GM12878 (cell line): ENCODE measurements at regions of chr12 and their contacts with region 1.

Region 1: DNA sequence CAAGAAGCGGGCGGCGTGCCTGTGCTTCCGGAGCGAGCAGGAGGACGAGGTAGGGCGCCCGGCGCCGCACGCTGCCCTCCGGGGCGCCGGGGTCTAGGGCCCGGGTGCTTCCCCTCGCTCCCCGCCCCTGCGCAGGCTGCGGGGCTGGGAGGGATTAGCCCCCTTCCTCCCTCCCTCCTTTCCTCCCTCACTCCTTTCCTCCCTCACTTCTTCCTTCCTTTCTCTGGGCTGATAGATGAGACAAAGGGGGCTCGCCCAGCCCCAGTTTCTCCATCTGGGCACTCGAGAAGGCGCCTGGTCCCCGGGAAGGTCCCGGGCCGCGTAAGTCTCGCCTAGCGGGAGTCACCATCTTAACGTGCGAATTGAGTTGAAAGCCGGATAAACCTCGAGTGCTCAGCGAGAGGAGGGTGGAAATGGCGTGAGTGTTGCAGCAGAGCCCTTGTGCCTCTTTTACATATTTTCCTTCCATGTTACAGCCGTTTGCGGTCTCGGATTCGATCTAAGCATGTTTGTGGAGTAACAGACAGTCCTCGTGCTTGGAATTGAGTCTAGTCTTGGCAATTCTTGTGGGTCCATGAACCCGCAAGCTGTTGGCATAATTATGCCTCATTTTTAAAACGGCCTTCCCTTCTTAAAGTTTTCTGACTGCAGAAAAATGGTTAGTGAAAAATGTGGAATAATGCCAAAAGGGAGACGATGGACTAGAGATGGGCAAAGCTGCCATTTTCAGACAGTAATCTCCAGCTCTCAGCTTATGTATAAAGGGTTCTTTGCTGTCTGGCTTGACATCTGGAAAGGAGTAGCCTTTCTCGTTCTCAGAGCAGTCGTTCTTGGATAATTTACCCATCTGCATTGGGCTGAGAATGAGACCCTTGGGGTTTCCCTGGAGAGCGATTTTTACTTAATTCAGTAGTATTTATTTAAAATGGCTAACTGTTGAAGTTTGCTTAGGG is 924 bp downstream of the NUDT4 start:
- DNase-seq: no peak
- ATAC-seq: peak; percentile 51
- H3K4me3 ChIP-seq: peak overlapping the region; percentile 87
- H3K27ac ChIP-seq: peak overlapping the region; percentile 98
- H3K4me1 ChIP-seq: peaks cover 15% of the 10 kb centered on the region
- H3K27me3 ChIP-seq: no peaks in the 10 kb centered on the region
- CTCF ChIP-seq: no peak
- EP300 ChIP-seq: no peak
- POLR2A ChIP-seq: peak; percentile 56
- RAD21 ChIP-seq: no peak

Region 2: DNA sequence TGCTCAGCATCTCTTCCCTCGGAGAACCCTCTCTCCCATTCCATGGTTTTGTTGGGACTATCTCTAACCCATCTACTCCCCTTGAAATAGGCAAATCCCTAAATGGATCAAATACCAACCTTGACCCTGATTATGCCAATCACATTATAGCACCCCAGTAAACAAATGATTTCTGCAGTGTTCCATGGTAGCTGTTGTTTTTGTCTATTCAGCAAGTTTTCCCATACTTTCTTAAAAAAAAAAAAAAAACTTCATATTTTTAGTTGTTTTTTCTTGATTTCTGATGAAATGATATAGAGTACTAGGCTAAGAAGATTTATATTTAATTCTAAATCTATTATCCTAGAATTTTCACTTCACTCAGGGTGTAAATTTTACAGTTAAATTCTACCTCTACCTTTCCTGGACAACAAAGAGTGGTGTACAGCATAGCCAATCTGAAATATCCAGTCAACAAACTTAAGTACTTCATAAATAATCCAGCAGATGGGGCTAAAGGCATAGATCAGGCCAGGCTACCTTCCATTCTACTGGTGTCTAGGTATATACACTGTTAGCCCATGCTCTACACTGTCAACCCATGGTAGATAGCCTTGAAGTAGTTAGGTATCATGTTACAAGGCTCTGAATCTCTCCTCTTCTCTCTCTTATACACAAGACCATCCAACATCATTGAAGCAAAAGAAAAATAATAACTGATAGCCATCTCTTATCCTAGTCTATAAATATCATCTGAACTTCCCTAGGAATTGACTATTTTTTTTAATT is 593.7 kb before region 1 on chr12:
- CTCF ChIA-PET with region 1: interaction called, 4 read pairs
- POLR2A ChIA-PET with region 1: no interaction called
- RAD21 ChIA-PET with region 1: interaction called, 3 read pairs
- SMC1A ChIA-PET with region 1: interaction called, 10 read pairs
- in situ Hi-C with region 1: no loop called
- intact Hi-C with region 1: no loop called
- DNase-seq: peak; percentile 70
- ATAC-seq: peak; percentile 99
- H3K4me3 ChIP-seq: no peak overlapping the region
- H3K27ac ChIP-seq: no peak overlapping the region
- H3K4me1 ChIP-seq: peaks cover 2% of the 10 kb centered on the region; the same call in 1 of the 2 replicates
- H3K27me3 ChIP-seq: no peaks in the 10 kb centered on the region
- CTCF ChIP-seq: peak; percentile 51 to 84 (median 57); a peak in 5 of 6 replicates
- EP300 ChIP-seq: no peak
- POLR2A ChIP-seq: no peak
- RAD21 ChIP-seq: peak; percentile 97

Region 3: DNA sequence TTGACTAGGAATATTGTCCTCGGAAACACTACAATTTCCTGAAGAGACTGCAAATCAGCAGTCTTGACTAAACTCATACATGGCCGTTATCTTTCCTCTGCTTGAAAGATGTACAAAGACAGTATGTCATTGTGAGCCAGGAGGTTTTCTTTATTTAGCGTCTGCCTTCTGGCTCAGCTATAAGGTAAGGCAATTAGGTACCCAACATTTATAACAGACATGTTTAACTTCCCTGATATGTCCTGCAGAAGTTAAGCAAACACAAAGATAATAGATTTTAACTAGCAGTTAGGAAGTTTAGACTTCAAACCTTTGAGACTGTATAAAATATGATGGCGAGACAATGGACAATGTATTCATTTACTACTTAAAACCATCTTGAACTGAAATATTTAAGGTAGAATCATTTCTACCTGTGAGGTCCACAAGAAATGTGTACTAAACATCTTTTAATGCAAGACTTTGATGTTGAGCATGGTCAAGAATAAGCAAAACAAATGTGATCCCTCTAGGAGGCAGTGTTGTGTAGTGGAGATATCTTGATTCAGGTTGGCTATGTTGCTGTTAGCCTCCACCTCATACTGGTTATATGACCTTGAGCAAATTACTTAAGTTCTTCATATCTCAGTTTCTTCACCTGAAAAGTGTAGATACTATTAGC is 353.4 kb before region 1 on chr12:
- CTCF ChIA-PET with region 1: interaction called, 17 read pairs
- POLR2A ChIA-PET with region 1: interaction called, 5 read pairs
- RAD21 ChIA-PET with region 1: interaction called, 8 read pairs
- SMC1A ChIA-PET with region 1: interaction called, 7 read pairs
- in situ Hi-C with region 1: no loop called
- intact Hi-C with region 1: loop called (anchors 1 kb)
- DNase-seq: peak; percentile 63
- ATAC-seq: peak; percentile 99
- H3K4me3 ChIP-seq: no peak overlapping the region
- H3K27ac ChIP-seq: no peak overlapping the region
- H3K4me1 ChIP-seq: no peaks in the 10 kb centered on the region
- H3K27me3 ChIP-seq: no peaks in the 10 kb centered on the region
- CTCF ChIP-seq: peak; percentile 61 to 70 (median 69); a peak in 5 of 6 replicates
- EP300 ChIP-seq: no peak
- POLR2A ChIP-seq: no peak
- RAD21 ChIP-seq: peak; percentile 91

Region 4: GRCh38 chr12:93098077-93098476 is 280.6 kb before region 1 on chr12:
- CTCF ChIA-PET with region 1: interaction called, 90 read pairs
- POLR2A ChIA-PET with region 1: interaction called, 6 read pairs
- RAD21 ChIA-PET with region 1: interaction called, 107 read pairs
- SMC1A ChIA-PET with region 1: interaction called, 102 read pairs
- in situ Hi-C with region 1: no loop called
- intact Hi-C with region 1: loop called (anchors 1 kb)
- DNase-seq: peak; percentile 51
- ATAC-seq: peak; percentile 80
- H3K4me3 ChIP-seq: no peak overlapping the region
- H3K27ac ChIP-seq: no peak overlapping the region
- H3K4me1 ChIP-seq: peaks cover 20% of the 10 kb centered on the region
- H3K27me3 ChIP-seq: no peaks in the 10 kb centered on the region
- CTCF ChIP-seq: peak; percentile 36 to 54 (median 52)
- EP300 ChIP-seq: no peak
- POLR2A ChIP-seq: no peak
- RAD21 ChIP-seq: peak; percentile 80

Region 5: DNA sequence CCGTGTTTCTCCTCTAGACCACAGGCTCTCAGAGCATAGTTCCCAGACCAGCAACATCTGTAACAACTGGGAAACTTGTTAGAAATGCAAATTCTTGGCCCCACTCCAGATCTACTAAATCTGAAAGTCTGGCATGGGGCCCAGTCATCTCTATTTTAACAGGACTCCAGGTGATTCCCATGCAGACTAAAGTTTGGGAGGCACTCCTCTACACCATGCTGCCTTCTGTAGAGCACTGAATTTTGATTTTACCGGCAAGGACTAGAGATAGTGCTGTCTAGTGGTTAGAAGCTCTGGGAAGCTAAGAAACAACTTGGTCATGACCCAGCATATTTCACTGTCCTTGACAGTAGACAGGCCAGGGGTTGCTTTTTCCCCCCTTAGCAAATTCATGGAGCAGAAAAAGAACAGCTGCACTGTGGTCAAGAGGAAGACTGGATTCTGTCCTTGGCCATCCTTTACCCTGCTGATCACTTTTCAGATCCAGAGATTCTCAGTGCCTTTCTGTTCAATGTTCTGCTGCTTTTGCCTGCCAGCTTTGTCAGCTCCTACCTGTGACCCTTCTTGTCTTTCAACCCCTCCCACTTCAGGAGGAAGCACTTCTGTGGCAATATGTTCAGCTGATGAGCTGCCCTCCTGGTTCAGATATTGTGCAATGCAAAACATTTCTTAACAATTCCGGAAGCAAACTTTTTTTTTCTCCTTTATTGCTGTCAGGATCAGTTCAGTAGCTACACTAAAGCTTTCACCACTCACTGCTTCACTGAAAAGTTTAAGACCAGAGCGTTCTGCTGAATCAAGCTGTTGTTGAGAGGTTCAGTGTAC is 134.7 kb before region 1 on chr12:
- CTCF ChIA-PET with region 1: interaction called, 42 read pairs
- POLR2A ChIA-PET with region 1: interaction called, 15 read pairs
- RAD21 ChIA-PET with region 1: interaction called, 27 read pairs
- SMC1A ChIA-PET with region 1: interaction called, 46 read pairs
- in situ Hi-C with region 1: no loop called
- intact Hi-C with region 1: loop called (anchors 2 kb)
- DNase-seq: peak; percentile 75
- ATAC-seq: peak; percentile 52
- H3K4me3 ChIP-seq: peak overlapping the region; percentile 47
- H3K27ac ChIP-seq: peak overlapping the region; percentile 87
- H3K4me1 ChIP-seq: peaks cover 62% of the 10 kb centered on the region
- H3K27me3 ChIP-seq: no peaks in the 10 kb centered on the region
- CTCF ChIP-seq: no peak
- EP300 ChIP-seq: no peak
- POLR2A ChIP-seq: no peak
- RAD21 ChIP-seq: 0 out of 2 replicates have a peak, but pooled peaks have one; percentile 1

Region 6: DNA sequence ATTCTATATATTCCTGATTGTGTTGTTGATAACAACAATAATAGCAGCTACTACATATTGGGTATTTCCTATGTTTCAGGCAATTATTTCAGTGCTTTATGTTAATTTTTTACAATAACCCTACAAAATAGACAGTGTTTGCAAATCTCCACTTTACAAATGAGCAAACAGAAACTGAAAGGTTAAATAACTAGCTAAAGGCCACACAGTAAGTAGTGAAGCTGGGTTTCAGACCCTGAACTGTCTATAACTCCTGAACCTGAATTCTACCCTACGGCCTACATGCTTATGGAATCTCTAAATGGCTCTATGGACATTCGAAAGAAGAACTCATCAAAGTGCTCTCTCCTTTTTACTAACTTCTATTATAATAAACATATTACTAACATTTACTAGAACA is 20.6 kb before region 1 on chr12:
- CTCF ChIA-PET with region 1: interaction called, 6 read pairs
- POLR2A ChIA-PET with region 1: interaction called, 3 read pairs
- RAD21 ChIA-PET with region 1: interaction called, 22 read pairs
- SMC1A ChIA-PET with region 1: interaction called, 14 read pairs
- in situ Hi-C with region 1: no loop called
- intact Hi-C with region 1: no loop called
- DNase-seq: no peak
- ATAC-seq: peak; percentile 97
- H3K4me3 ChIP-seq: no peak overlapping the region
- H3K27ac ChIP-seq: peak overlapping the region; percentile 37
- H3K4me1 ChIP-seq: peaks cover 12% of the 10 kb centered on the region
- H3K27me3 ChIP-seq: no peaks in the 10 kb centered on the region
- CTCF ChIP-seq: no peak
- EP300 ChIP-seq: no peak
- POLR2A ChIP-seq: no peak
- RAD21 ChIP-seq: no peak

Region 7: GRCh38 chr12:93419388-93420034 is 40.9 kb after region 1 on chr12:
- CTCF ChIA-PET with region 1: interaction called, 66 read pairs
- POLR2A ChIA-PET with region 1: no interaction called
- RAD21 ChIA-PET with region 1: interaction called, 36 read pairs
- SMC1A ChIA-PET with region 1: interaction called, 36 read pairs
- in situ Hi-C with region 1: no loop called
- intact Hi-C with region 1: no loop called
- DNase-seq: no peak
- ATAC-seq: peak; percentile 54
- H3K4me3 ChIP-seq: no peak overlapping the region
- H3K27ac ChIP-seq: no peak overlapping the region
- H3K4me1 ChIP-seq: peaks cover 83% of the 10 kb centered on the region
- H3K27me3 ChIP-seq: no peaks in the 10 kb centered on the region
- CTCF ChIP-seq: peak; percentile 48 to 58 (median 54); a peak in 5 of 6 replicates
- EP300 ChIP-seq: no peak
- POLR2A ChIP-seq: no peak
- RAD21 ChIP-seq: peak; percentile 46; the same call in 1 of the 2 replicates